Breast epithelium (tissue), 4 donors: ENCODE measurements at regions of chr16 and their contacts with region 1.

Region 1: DNA sequence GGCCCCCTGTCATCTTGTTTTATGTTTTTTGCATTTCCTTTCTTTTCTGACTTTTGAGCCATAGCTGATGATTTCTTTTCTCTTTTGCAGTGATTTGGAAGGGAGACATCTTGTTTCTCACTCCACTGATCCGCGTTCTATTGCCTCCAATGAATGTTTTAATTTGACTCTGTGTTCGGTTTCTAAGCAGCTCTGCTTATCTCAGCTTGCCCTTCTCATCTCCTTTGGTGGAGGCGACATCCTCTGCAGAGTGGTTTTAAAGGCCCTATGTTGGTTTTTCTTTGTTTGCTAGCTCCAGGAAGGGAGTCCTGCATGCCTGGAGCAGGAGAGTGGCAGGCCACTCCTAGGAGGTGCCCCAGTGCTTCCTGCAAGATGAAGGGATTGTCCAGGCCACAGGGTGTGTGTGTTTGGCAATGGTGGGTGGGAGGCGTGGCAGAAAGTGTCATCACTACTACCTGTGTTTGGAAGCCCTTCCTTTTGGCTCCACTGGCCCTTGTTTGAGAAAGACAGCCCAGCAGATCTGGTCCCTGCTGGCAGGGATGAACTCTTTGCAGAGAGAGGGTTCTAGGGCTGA is 13.6 kb downstream of the SMPD3 start:
- DNase-seq: peak; percentile 79 to 80
- H3K4me3 ChIP-seq: no peak overlapping the region
- H3K27ac ChIP-seq: peak overlapping the region; percentile 34 to 66
- H3K4me1 ChIP-seq: no peaks in the 10 kb centered on the region
- H3K27me3 ChIP-seq: no peaks in the 10 kb centered on the region
- CTCF ChIP-seq: no peak
- POLR2A ChIP-seq: no peak

Region 2: GRCh38 chr16:68884861-68885720 is 450.4 kb after region 1 on chr16:
- intact Hi-C with region 1: loop called (anchors 5 kb)
- DNase-seq: no peak
- H3K4me3 ChIP-seq: no peak overlapping the region
- H3K27ac ChIP-seq: peak overlapping the region; percentile 29 to 50
- H3K4me1 ChIP-seq: no peaks in the 10 kb centered on the region
- H3K27me3 ChIP-seq: no peaks in the 10 kb centered on the region
- CTCF ChIP-seq: no peak
- POLR2A ChIP-seq: no peak